ENCODE measurements at regions of chr9 and their contacts with region 1.

Region 1: GRCh38 chr9:93566408-93567270 is 9.7 kb upstream of the PHF2 start:
- DNase-seq: peak; percentile 97
- ATAC-seq: peak; percentile 99
- H3K4me3 ChIP-seq: peak overlapping the region; percentile 59 to 83 (median 74)
- H3K4me3 Mint-ChIP-seq: peak overlapping the region; percentile 88
- H3K27ac ChIP-seq: peak overlapping the region; percentile 87 to 92
- H3K27ac Mint-ChIP-seq: peak overlapping the region; percentile 93
- H3K4me1 ChIP-seq: peaks cover 21 to 24% of the 10 kb centered on the region in 2 donors
- H3K4me1 Mint-ChIP-seq: peaks cover 28% of the 10 kb centered on the region
- H3K27me3 ChIP-seq: no peaks in the 10 kb centered on the region
- H3K27me3 Mint-ChIP-seq: no peaks in the 10 kb centered on the region
- CTCF ChIP-seq: peak; percentile 96

Region 2: DNA sequence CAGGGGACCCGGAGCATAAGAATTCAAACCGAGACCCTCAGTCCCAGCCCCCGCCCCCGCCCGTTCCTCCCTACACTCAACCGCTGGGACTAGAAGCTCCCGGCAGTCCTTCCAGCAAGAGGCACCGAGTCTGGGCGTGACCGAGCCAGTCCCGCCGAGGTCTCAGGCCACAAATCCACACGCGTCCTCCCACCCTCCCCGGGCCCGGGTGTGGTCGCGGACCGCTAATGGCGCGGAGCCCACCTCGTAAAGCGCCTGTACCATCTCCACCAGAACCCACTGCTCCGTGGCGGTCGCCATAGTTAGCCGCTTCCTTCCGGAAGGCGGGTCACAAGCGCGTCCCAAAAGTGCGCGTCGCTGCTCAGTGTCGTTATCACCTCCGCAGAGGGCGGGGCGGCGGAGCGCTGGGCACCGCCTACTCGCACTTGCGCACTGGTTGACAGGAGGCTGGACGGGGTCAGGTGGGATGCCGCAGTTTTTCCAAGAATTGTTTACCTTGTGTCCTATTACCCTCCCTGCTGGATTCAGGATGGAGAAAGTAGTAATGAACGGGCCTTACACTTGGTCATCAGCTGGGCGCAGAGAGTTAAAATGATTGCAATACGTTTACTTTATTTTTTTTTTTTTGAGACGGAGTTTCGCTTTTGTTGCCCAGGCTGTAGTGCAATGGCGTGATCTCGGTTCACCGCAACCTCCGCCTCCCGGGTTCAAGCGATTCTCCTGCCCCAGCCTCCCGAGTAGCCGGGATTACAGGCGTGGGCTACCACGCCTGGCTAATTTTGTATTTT is 1451.4 kb before region 1 on chr9 and contains the start of gene SPTLC1:
- CTCF ChIA-PET with region 1: no interaction called
- POLR2A ChIA-PET with region 1: no interaction called
- intact Hi-C with region 1: loop called (anchors 10 kb)
- DNase-seq: peak; percentile 97
- ATAC-seq: peak; percentile 98
- H3K4me3 ChIP-seq: peak within 1 kb of the TSS; percentile 63 to 91 (median 83)
- H3K4me3 Mint-ChIP-seq: peak within 1 kb of the TSS; percentile 99
- H3K27ac ChIP-seq: peak within 1 kb of the TSS; percentile 81 to 96
- H3K27ac Mint-ChIP-seq: peak within 1 kb of the TSS; percentile 99
- H3K4me1 ChIP-seq: peaks cover 15 to 16% of the 10 kb centered on the region in 2 donors
- H3K4me1 Mint-ChIP-seq: peaks cover 29% of the 10 kb centered on the region
- H3K27me3 ChIP-seq: no peaks in the 10 kb centered on the region
- H3K27me3 Mint-ChIP-seq: no peaks in the 10 kb centered on the region
- CTCF ChIP-seq: no peak
- total RNA-seq, gene SPTLC1: 53.5 and 57.3 TPM in 2 replicates

Region 3: GRCh38 chr9:93058355-93059096 is 508.1 kb before region 1 on chr9 and contains the start of gene SUSD3:
- CTCF ChIA-PET with region 1: no interaction called
- POLR2A ChIA-PET with region 1: no interaction called
- intact Hi-C with region 1: loop called (anchors 5 kb)
- DNase-seq: peak; percentile 83
- ATAC-seq: peak; percentile 75
- H3K4me3 ChIP-seq: peak within 1 kb of the TSS; percentile 56 to 69 (median 67)
- H3K4me3 Mint-ChIP-seq: peak within 1 kb of the TSS; percentile 90
- H3K27ac ChIP-seq: peak within 1 kb of the TSS; percentile 79 to 80
- H3K27ac Mint-ChIP-seq: peak within 1 kb of the TSS; percentile 99
- H3K4me1 ChIP-seq: peaks cover 50 to 60% of the 10 kb centered on the region in 2 donors
- H3K4me1 Mint-ChIP-seq: peaks cover 66% of the 10 kb centered on the region
- H3K27me3 ChIP-seq: no peaks in the 10 kb centered on the region
- H3K27me3 Mint-ChIP-seq: no peaks in the 10 kb centered on the region
- CTCF ChIP-seq: no peak
- total RNA-seq, gene SUSD3: 38.3 and 41.0 TPM in 2 replicates

Region 4: GRCh38 chr9:93453047-93453914 is 113.4 kb before region 1 on chr9 and contains the start of gene FAM120AOS:
- CTCF ChIA-PET with region 1: interaction called, 12 read pairs
- POLR2A ChIA-PET with region 1: interaction called, 7 read pairs
- intact Hi-C with region 1: loop called (anchors 1 kb)
- DNase-seq: peak; percentile 92
- ATAC-seq: peak; percentile 72
- H3K4me3 ChIP-seq: peak within 1 kb of the TSS; percentile 73 to 96 (median 84)
- H3K4me3 Mint-ChIP-seq: peak within 1 kb of the TSS; percentile 93
- H3K27ac ChIP-seq: peak within 1 kb of the TSS; percentile 65 to 79
- H3K27ac Mint-ChIP-seq: peak within 1 kb of the TSS; percentile 93
- H3K4me1 ChIP-seq: peaks cover 20 to 29% of the 10 kb centered on the region in 2 donors
- H3K4me1 Mint-ChIP-seq: peaks cover 44% of the 10 kb centered on the region
- H3K27me3 ChIP-seq: no peaks in the 10 kb centered on the region
- H3K27me3 Mint-ChIP-seq: no peaks in the 10 kb centered on the region
- CTCF ChIP-seq: no peak
- total RNA-seq, gene FAM120AOS: 47.8 and 51.2 TPM in 2 replicates

Region 5: GRCh38 chr9:93582115-93582514 is 15.5 kb after region 1 on chr9:
- CTCF ChIA-PET with region 1: interaction called, 12 read pairs
- POLR2A ChIA-PET with region 1: no interaction called
- intact Hi-C with region 1: no loop called
- DNase-seq: no peak
- ATAC-seq: no peak
- H3K4me3 ChIP-seq: no peak overlapping the region
- H3K4me3 Mint-ChIP-seq: no peak overlapping the region
- H3K27ac ChIP-seq: no peak overlapping the region
- H3K27ac Mint-ChIP-seq: no peak overlapping the region
- H3K4me1 ChIP-seq: peaks cover 8 to 11% of the 10 kb centered on the region in 2 donors
- H3K4me1 Mint-ChIP-seq: peaks cover 29% of the 10 kb centered on the region
- H3K27me3 ChIP-seq: no peaks in the 10 kb centered on the region
- H3K27me3 Mint-ChIP-seq: no peaks in the 10 kb centered on the region
- CTCF ChIP-seq: no peak

Region 6: GRCh38 chr9:94259077-94259892 is 692.6 kb after region 1 on chr9 and contains the start of gene ZNF169:
- CTCF ChIA-PET with region 1: no interaction called
- POLR2A ChIA-PET with region 1: no interaction called
- intact Hi-C with region 1: loop called (anchors 2 kb)
- DNase-seq: peak; percentile 85
- ATAC-seq: peak; percentile 100
- H3K4me3 ChIP-seq: peak within 1 kb of the TSS; percentile 79 to 100 (median 82)
- H3K4me3 Mint-ChIP-seq: peak within 1 kb of the TSS; percentile 97
- H3K27ac ChIP-seq: peak within 1 kb of the TSS; percentile 26 to 77
- H3K27ac Mint-ChIP-seq: peak within 1 kb of the TSS; percentile 96
- H3K4me1 ChIP-seq: peaks cover 7 to 19% of the 10 kb centered on the region in 2 donors
- H3K4me1 Mint-ChIP-seq: peaks cover 28% of the 10 kb centered on the region
- H3K27me3 ChIP-seq: peaks cover 0 to 6% (median 4%) of the 10 kb centered on the region in 4 experiments
- H3K27me3 Mint-ChIP-seq: peaks cover 3% of the 10 kb centered on the region
- CTCF ChIP-seq: no peak
- total RNA-seq, gene ZNF169: 26.2 and 26.9 TPM in 2 replicates